CD8-positive, alpha-beta T cell (primary cell): ENCODE measurements at regions of chr4 and their contacts with region 1.

Region 1: GRCh38 chr4:42371306-42372252 is 25.7 kb upstream of the SHISA3 start:
- DNase-seq: peak in 2 of 9 experiments; percentile 17 to 38
- ATAC-seq: no peak
- H3K4me3 ChIP-seq: no peak overlapping the region
- H3K4me3 Mint-ChIP-seq: no peak overlapping the region
- H3K27ac ChIP-seq: no peak overlapping the region
- H3K27ac Mint-ChIP-seq: no peak overlapping the region
- H3K4me1 ChIP-seq: no peaks in the 10 kb centered on the region
- H3K4me1 Mint-ChIP-seq: no peaks in the 10 kb centered on the region
- H3K27me3 ChIP-seq: no peaks in the 10 kb centered on the region
- H3K27me3 Mint-ChIP-seq: peaks cover 9% of the 10 kb centered on the region
- CTCF ChIP-seq: peak; percentile 23

Region 2: DNA sequence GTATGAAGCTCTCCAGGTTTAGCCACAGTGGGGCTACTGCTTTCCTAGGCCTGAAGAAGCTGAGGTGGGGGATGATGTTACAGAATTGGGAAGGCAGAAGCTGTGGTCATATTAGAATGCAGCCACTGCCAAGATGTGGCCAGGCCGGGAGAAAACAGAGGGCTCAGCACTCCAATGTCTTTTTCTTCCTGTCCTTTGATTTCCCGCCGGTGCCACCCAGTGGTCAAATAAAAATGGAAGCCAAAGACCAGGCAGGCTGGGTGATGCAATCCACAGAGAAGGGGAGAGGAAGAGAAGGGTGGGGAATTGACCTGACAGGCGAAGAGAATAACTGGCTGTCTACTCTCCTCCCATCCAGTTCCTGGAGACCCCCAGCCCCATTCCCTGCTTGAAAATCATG is 69.2 kb before region 1 on chr4:
- CTCF ChIA-PET with region 1: no interaction called
- POLR2A ChIA-PET with region 1: no interaction called
- intact Hi-C with region 1: no loop called
- DNase-seq: no peak
- ATAC-seq: no peak
- H3K4me3 ChIP-seq: no peak overlapping the region
- H3K4me3 Mint-ChIP-seq: no peak overlapping the region
- H3K27ac ChIP-seq: no peak overlapping the region
- H3K27ac Mint-ChIP-seq: no peak overlapping the region
- H3K4me1 ChIP-seq: no peaks in the 10 kb centered on the region
- H3K4me1 Mint-ChIP-seq: no peaks in the 10 kb centered on the region
- H3K27me3 ChIP-seq: no peaks in the 10 kb centered on the region
- H3K27me3 Mint-ChIP-seq: peaks cover 22% of the 10 kb centered on the region
- CTCF ChIP-seq: no peak

Region 3: DNA sequence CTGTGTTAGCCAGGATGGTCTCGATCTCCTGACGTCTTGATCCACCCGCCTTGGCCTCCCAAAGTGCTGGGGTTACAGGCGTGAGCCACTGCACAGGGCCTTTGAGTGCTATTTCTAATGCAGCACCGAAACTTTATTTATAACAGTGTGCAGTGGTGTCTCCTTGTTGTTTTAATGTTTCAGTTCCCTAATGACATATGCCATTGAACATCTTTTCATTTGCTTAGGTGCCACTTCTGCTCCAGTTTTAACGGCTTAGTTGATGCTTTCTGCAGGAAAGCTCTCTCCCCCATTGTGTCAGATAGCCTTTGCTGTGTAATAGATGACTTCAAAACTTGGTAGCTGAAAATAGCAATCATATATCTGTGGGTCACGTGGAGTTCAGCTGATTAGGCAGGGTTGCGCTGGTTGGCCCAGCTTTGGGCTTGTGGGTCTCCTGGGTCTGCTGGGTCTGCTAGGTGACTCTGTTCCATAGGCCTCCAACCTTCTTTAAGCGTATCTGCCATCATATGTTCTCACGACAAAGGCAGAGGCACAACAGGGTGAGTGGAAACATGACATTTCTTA is 50.7 kb before region 1 on chr4:
- CTCF ChIA-PET with region 1: no interaction called
- POLR2A ChIA-PET with region 1: no interaction called
- intact Hi-C with region 1: no loop called
- DNase-seq: no peak
- ATAC-seq: no peak
- H3K4me3 ChIP-seq: no peak overlapping the region
- H3K4me3 Mint-ChIP-seq: no peak overlapping the region
- H3K27ac ChIP-seq: no peak overlapping the region
- H3K27ac Mint-ChIP-seq: no peak overlapping the region
- H3K4me1 ChIP-seq: no peaks in the 10 kb centered on the region
- H3K4me1 Mint-ChIP-seq: no peaks in the 10 kb centered on the region
- H3K27me3 ChIP-seq: no peaks in the 10 kb centered on the region
- H3K27me3 Mint-ChIP-seq: peaks cover 8% of the 10 kb centered on the region
- CTCF ChIP-seq: no peak

Region 4: DNA sequence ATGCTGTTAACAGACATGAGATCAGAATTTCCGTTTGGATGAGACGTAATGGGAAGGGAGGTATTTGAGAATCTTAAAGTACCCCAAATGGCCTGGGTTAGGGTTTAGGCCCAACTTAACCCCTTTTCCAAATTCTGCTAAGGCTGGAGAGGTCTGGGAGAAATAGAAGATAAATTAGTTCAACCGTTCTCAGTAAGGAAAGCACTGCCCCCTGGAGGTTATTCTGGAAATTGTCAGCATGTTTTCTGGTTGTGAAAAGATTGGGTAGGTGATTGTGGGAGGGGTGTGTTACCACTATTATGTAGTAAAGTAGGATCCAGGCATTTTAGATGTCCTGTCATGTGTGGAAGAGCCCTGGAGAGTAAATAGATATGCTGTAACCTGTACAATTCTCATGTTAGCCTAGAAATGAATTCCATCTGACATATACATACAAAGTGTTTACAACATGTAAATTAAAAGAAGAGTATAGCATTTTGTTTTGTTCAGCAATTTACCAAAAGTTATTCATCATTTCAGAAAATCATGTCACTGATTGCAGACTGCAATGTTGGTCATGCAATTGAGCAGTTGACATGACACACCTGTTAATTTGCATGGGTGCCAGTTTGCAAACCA is 494.1 kb after region 1 on chr4:
- CTCF ChIA-PET with region 1: interaction called, 5 read pairs
- POLR2A ChIA-PET with region 1: no interaction called
- intact Hi-C with region 1: loop called (anchors 1 to 10 kb)
- DNase-seq: peak; percentile 6 to 65 (median 47)
- ATAC-seq: peak; percentile 44
- H3K4me3 ChIP-seq: no peak overlapping the region
- H3K4me3 Mint-ChIP-seq: no peak overlapping the region
- H3K27ac ChIP-seq: no peak overlapping the region
- H3K27ac Mint-ChIP-seq: no peak overlapping the region
- H3K4me1 ChIP-seq: no peaks in the 10 kb centered on the region
- H3K4me1 Mint-ChIP-seq: no peaks in the 10 kb centered on the region
- H3K27me3 ChIP-seq: no peaks in the 10 kb centered on the region
- H3K27me3 Mint-ChIP-seq: peaks cover 31% of the 10 kb centered on the region
- CTCF ChIP-seq: peak; percentile 76

Region 5: DNA sequence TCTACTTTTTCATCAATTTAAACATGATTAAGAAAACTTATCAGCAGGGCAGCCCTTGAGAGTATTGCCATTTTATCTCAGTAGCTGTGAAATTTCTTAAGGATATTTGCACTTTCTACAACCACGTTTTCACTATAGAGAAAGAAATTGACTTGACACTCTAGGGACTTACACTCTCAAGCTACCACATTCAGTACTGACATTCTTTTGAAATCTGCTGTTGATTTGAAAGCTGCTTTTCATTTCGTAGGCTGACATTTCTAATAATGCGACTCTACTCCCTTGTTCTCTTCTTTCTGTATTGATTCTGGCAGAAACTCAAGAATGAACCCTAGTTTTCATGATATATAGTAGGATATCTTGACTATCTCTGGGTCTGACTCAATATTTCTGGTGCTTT is 507.3 kb after region 1 on chr4:
- CTCF ChIA-PET with region 1: no interaction called
- POLR2A ChIA-PET with region 1: no interaction called
- intact Hi-C with region 1: no loop called
- DNase-seq: no peak
- ATAC-seq: no peak
- H3K4me3 ChIP-seq: no peak overlapping the region
- H3K4me3 Mint-ChIP-seq: no peak overlapping the region
- H3K27ac ChIP-seq: no peak overlapping the region
- H3K27ac Mint-ChIP-seq: no peak overlapping the region
- H3K4me1 ChIP-seq: no peaks in the 10 kb centered on the region
- H3K4me1 Mint-ChIP-seq: no peaks in the 10 kb centered on the region
- H3K27me3 ChIP-seq: peaks cover 2 to 3% of the 10 kb centered on the region in 2 experiments
- H3K27me3 Mint-ChIP-seq: peaks cover 15% of the 10 kb centered on the region
- CTCF ChIP-seq: no peak